Colonic mucosa (tissue), 4 donors: ENCODE measurements at regions of chr19 and their contacts with region 1.

Region 1: DNA sequence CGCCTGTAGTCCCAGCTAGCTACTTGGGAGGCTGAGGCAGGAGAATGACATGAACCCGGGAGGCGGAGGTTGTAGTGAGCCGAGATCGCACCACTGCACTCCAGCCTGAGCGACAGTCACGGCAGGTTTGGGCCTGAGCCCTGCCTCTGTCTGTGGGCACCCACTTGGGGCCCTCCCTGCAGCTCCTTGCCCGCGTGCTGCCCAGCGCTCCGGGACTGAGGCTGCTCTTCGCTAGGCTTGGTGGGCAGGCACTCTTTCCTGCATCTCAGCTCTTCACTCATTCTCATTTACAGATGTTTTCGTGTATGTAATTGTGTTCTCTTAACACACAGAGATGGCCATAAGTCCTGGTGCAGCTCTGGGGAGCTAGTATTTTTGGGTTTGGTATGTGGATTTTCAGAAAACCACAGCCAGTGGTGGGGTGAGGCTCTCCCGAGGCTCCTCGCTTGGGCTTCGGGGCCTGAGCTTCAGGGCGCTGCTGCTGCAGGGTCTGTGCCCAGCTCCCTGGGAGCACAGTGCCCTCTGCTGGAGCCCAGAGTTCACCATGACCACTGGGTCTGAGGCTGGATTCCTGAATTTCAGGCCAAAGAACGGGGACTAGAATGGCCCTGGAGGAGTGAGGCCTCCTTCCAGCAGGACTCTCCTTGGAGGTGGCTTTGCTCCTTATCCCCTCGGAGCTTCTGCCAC is 15.2 kb downstream of the UPF1 start:
- DNase-seq: peak; percentile 76
- H3K4me3 ChIP-seq: no peak overlapping the region
- H3K27ac ChIP-seq: no peak overlapping the region
- H3K4me1 ChIP-seq: peaks cover 9% of the 10 kb centered on the region
- H3K27me3 ChIP-seq: no peaks in the 10 kb centered on the region
- CTCF ChIP-seq: peak; percentile 76

Region 2: DNA sequence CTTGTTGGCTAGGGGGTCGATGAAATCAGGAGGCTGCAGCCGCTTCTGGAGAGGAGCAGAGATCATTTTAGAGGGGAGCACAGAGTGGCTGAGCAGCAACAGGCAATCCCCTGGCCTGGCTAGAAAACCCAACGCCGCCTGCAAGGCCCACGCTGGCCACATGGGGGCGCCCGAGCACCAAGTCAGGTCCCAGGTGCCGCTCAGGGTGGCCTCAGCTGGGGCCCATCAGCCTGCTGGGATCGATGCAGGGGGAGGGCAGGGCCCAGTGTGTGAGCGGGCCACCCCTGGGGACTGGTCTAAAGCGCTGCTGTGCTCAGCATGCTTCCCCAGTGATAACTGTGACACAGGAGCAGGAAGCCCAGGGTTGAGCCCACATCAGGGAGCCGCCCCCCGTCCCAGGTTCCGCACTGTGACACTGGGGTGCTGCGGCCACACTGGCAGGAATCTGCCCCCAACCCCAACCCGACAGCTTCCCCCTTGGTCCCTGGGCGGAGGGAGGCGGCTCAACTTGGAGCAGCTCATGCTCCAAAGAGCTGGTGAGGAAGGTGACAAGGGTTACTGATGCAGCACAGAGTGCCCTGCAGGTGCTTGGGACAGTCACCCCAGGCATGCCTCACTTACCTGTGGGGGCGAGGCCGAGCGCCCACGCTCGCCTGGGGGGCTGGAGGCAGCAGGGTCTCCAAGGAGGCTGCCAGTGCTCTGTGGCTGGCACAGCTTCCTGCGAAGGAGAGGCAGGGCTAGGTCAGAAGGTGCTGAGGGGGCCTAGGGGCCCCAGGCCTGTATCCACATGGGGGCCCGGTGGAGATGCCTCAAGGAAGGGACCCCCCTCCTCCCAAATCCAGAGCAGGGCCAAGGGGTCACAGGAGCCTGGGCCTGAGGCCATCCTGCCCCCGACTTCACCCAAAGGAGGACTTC is 395.8 kb before region 1 on chr19:
- intact Hi-C with region 1: loop called (anchors 10 kb)
- DNase-seq: peak; percentile 90
- H3K4me3 ChIP-seq: no peak overlapping the region
- H3K27ac ChIP-seq: no peak overlapping the region
- H3K4me1 ChIP-seq: no peaks in the 10 kb centered on the region
- H3K27me3 ChIP-seq: no peaks in the 10 kb centered on the region
- CTCF ChIP-seq: peak; percentile 99

Region 3: GRCh38 chr19:18589380-18590272 is 257.4 kb before region 1 on chr19:
- intact Hi-C with region 1: loop called (anchors 5 kb)
- DNase-seq: peak; percentile 72
- H3K4me3 ChIP-seq: peak overlapping the region; percentile 93
- H3K27ac ChIP-seq: peak overlapping the region; percentile 97
- H3K4me1 ChIP-seq: peaks cover 11% of the 10 kb centered on the region
- H3K27me3 ChIP-seq: no peaks in the 10 kb centered on the region
- CTCF ChIP-seq: no peak

Region 4: DNA sequence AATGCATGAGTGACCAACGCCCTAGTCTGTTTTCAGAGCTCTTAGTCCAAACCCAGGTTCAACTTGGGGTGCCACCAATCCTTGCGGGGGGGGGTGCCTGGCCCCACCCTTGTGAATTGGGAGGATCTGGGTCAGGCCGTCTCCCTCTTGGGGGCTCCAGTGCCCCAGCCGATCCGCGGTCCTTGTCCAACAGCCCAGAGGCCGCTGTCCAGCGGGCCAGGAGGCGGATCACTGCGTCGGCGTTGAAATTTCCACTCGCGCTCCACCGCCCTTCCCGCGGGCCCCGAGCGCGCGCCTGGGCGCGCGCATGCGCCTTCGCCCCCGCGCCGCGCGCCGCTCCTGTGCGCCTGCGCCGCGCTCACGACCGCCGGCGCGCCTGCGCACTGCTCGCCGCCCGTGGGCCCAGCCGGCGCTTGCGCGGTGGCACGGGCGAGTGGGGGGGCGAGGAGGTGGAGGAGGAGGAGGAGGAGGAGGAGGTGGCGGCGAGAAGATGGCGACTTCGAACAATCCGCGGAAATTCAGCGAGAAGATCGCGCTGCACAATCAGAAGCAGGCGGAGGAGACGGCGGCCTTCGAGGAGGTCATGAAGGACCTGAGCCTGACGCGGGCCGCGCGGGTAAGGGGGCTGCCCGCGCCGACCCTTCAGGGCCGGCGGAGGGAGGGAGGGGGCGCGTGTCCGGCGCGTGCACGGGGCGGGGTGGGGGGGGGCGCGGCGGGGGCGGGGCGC is 163.6 kb before region 1 on chr19 and contains the start of gene CRTC1:
- intact Hi-C with region 1: loop called (anchors 10 kb)
- DNase-seq: peak; percentile 90
- H3K4me3 ChIP-seq: peak within 1 kb of the TSS; percentile 54
- H3K27ac ChIP-seq: peak within 1 kb of the TSS; percentile 61
- H3K4me1 ChIP-seq: peaks cover 7% of the 10 kb centered on the region
- H3K27me3 ChIP-seq: no peaks in the 10 kb centered on the region
- CTCF ChIP-seq: no peak
- total RNA-seq, gene CRTC1: 7.6 to 10.3 TPM

Region 5: GRCh38 chr19:18940769-18941407 is 93.9 kb after region 1 on chr19 and contains the start of gene HOMER3:
- intact Hi-C with region 1: no loop called
- DNase-seq: peak; percentile 84
- H3K4me3 ChIP-seq: peak within 1 kb of the TSS; percentile 44
- H3K27ac ChIP-seq: no peak within 1 kb of the TSS
- H3K4me1 ChIP-seq: no peaks in the 10 kb centered on the region
- H3K27me3 ChIP-seq: peaks cover 5% of the 10 kb centered on the region
- CTCF ChIP-seq: no peak
- total RNA-seq, gene HOMER3: 1.9 to 5.3 TPM